Panc1 (cell line): ENCODE measurements at regions of chr3 and their contacts with region 1.

Region 1: GRCh38 chr3:183151086-183151485 is 11.4 kb downstream of the LAMP3 start:
- DNase-seq: no peak
- ATAC-seq: no peak
- H3K4me3 ChIP-seq: no peak overlapping the region
- H3K27ac ChIP-seq: no peak overlapping the region
- H3K4me1 ChIP-seq: no peaks in the 10 kb centered on the region
- H3K27me3 ChIP-seq: no peaks in the 10 kb centered on the region
- CTCF ChIP-seq: no peak

Region 2: GRCh38 chr3:182708810-182709209 is 442.3 kb before region 1 on chr3:
- CTCF ChIA-PET with region 1: no interaction called
- POLR2A ChIA-PET with region 1: interaction called, 12 read pairs
- in situ Hi-C with region 1: no loop called
- intact Hi-C with region 1: no loop called
- DNase-seq: no peak
- ATAC-seq: no peak; the same call in 1 of the 2 replicates
- H3K4me3 ChIP-seq: no peak overlapping the region
- H3K27ac ChIP-seq: no peak overlapping the region
- H3K4me1 ChIP-seq: no peaks in the 10 kb centered on the region
- H3K27me3 ChIP-seq: 0 out of 2 replicates have a peak, but pooled peaks cover 2% of the 10 kb centered on the region
- CTCF ChIP-seq: no peak

Region 3: DNA sequence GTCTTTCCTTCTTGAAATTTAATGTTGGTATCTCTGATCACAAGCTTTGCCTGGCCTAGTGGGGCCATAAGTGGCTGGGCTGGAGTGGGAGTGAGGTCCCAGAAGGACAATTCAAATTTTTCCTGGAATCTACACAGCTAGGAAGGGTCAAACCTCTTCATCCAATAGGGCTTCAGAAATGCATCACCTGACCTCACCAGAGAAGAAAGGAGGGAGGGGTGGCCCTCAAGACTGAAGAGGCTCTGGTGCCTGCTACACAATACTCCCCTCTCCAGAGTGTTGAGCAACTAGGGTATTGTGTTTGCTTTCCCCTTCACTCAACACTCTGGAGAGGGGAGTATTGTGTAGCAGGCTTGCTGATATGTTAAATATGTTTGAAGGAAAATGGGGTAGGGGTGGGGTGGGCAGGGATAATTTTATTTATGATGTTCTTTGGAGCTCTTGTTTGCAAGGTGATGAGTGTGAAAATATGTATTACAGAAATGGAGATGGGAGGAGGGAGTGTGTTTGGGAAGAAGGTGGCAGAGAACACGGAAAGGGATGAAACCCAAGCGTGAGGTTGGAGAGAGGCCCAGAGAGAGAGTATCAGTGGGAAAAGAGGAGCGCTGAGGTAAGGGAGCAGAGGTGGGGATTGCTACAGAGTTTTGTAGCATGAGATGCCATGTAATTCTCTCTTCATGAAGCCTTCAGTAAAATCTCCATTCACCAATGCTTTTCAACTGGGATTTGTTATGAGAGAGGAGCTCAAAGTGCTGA is 478.6 kb after region 1 on chr3:
- CTCF ChIA-PET with region 1: no interaction called
- POLR2A ChIA-PET with region 1: interaction called, 11 read pairs
- in situ Hi-C with region 1: no loop called
- intact Hi-C with region 1: no loop called
- DNase-seq: no peak
- ATAC-seq: no peak
- H3K4me3 ChIP-seq: no peak overlapping the region
- H3K27ac ChIP-seq: no peak overlapping the region
- H3K4me1 ChIP-seq: peaks cover 1% of the 10 kb centered on the region
- H3K27me3 ChIP-seq: no peaks in the 10 kb centered on the region
- CTCF ChIP-seq: no peak